OCI-LY7 (cell line): ENCODE measurements at regions of chr2 and their contacts with region 1.

Region 1: GRCh38 chr2:218406209-218406948 is 6.7 kb downstream of the CTDSP1 start:
- DNase-seq: peak; percentile 95
- H3K4me3 ChIP-seq: peak overlapping the region; percentile 60
- H3K27ac ChIP-seq: peak overlapping the region; percentile 81
- H3K4me1 ChIP-seq: peaks cover 53% of the 10 kb centered on the region
- CTCF ChIP-seq: peak; percentile 84

Region 2: DNA sequence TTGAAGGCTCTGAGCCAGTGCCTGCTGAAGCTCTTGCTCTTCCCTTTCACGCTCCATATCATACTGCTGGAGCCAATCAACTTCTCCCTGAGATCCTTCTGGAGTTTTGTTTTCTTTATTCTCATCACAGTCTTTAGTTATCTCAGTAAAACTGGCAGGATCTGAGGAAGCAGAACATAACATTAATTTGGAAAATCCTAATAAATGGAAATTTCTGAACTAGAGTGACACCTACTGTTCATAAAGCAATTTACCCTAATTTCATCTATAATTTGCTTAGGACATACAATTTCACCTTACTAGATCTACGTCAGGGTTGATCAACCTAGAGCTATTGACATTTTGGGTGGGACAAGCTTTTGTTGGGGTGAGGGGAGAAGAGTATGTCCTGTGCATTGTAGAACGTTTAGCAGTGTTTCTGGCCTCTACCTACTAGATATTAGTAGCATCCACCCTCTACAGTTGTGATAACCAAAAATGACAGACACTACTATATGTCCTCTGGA is 59.7 kb after region 1 on chr2:
- CTCF ChIA-PET with region 1: interaction called, 3 read pairs
- POLR2A ChIA-PET with region 1: no interaction called
- intact Hi-C with region 1: loop called (anchors 1 kb)
- DNase-seq: peak; percentile 24
- H3K4me3 ChIP-seq: no peak overlapping the region
- H3K27ac ChIP-seq: no peak overlapping the region
- H3K4me1 ChIP-seq: peaks cover 6% of the 10 kb centered on the region
- CTCF ChIP-seq: peak; percentile 87

Region 3: DNA sequence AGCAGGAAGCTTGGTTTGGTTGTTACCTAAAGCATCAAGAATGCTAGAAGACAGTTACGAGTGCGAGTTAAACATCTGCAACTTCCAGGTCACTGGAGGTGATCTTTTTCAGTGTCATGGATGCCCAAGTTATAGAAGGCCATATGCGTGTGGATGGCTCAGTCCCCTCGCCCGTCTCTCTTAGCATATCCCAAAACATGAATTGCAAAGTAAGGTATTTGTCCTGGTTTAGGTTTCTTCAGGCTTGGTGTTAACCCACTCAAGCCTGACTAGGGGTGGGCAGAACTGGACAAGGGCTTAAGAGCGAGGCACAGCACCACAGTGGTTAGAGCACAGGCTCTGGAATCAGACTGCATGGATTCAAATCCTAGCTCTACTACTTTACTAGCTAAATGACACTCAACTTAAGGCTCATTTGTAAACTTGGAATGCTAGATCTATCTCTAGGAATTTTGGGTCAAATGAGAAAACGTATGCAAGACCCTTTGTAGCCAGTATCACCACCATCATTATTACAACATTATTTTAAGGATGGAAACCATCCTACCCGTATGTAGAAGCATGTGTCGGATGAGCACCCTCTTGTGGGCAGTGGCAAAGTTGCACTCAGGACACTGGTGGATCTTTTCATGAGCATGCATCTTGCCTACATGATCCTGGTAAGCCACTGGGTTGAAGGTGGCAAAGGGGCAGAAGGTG is 241.9 kb after region 1 on chr2:
- CTCF ChIA-PET with region 1: no interaction called
- POLR2A ChIA-PET with region 1: no interaction called
- intact Hi-C with region 1: loop called (anchors 2 kb)
- DNase-seq: peak; percentile 67
- H3K4me3 ChIP-seq: no peak overlapping the region
- H3K27ac ChIP-seq: no peak overlapping the region
- H3K4me1 ChIP-seq: no peaks in the 10 kb centered on the region
- CTCF ChIP-seq: peak; percentile 96